Transverse colon (tissue), 4 donors: ENCODE measurements at regions of chr20 and their contacts with region 1.

Region 1: DNA sequence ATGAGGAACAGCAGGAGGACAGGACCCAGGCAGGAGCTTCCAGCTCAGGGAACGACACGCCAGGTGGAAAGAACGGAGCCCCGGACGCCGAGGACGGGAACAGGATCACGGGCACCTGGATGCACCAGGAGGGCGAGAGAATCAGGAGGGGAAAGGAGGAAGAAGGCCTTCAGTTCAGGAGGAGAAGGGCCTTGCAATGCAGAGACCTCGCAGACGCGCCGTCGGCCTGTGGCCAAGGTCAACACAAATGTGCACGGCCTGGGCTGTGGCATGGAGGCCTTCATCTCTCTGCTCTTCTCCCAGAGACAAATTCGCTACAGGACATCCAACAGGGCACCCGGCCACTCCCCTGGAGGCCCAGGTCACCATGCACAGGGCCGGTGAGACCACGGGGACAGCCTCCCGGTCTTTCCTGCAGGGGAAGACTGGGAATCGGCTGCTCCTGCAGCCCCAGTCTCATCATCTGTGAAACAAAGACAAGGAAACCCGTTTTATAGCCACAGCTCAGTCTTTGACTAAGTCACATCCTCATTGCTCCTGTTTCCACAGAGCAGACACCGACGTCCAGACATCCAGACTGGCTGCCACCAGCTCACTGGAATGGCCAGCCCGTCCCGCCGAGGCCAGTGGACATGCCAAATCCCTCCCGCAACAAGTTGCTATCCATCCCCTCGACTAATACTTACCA is 49.1 kb downstream of the YTHDF1 start:
- DNase-seq: no peak
- H3K4me3 ChIP-seq: no peak overlapping the region
- H3K27ac ChIP-seq: no peak overlapping the region
- H3K4me1 ChIP-seq: no peaks in the 10 kb centered on the region
- H3K27me3 ChIP-seq: peaks cover 6% of the 10 kb centered on the region
- CTCF ChIP-seq: no peak
- EP300 ChIP-seq: no peak
- POLR2A ChIP-seq: no peak

Region 2: GRCh38 chr20:63132715-63133471 is 33.9 kb before region 1 on chr20:
- in situ Hi-C with region 1: no loop called
- intact Hi-C with region 1: loop called (anchors 1 kb)
- DNase-seq: no peak
- H3K4me3 ChIP-seq: no peak overlapping the region
- H3K27ac ChIP-seq: no peak overlapping the region
- H3K4me1 ChIP-seq: no peaks in the 10 kb centered on the region
- H3K27me3 ChIP-seq: peaks cover 31% of the 10 kb centered on the region
- CTCF ChIP-seq: no peak
- EP300 ChIP-seq: no peak
- POLR2A ChIP-seq: no peak

Region 3: DNA sequence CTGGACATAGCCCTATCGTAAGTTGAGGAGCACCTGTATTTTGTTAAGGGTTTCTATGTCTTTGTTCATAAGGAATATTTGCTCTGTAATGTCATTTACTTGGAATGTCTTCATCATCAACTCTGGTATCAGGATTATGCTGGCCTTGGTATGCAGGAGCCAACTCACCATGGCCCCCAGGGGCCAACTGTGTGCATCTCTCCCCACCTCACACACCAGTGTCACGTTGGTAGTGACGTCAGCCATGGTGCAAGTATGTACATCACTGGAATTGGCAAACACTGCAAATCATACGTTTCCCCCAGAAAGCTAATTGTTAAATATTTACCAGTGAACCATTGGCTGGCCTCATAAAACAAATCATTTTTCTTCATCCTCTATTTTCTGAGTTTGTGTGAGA is 21.7 kb before region 1 on chr20:
- in situ Hi-C with region 1: no loop called
- intact Hi-C with region 1: no loop called
- DNase-seq: no peak
- H3K4me3 ChIP-seq: no peak overlapping the region
- H3K27ac ChIP-seq: no peak overlapping the region
- H3K4me1 ChIP-seq: no peaks in the 10 kb centered on the region
- H3K27me3 ChIP-seq: peaks cover 21% of the 10 kb centered on the region
- CTCF ChIP-seq: no peak
- EP300 ChIP-seq: no peak
- POLR2A ChIP-seq: no peak

Region 4: DNA sequence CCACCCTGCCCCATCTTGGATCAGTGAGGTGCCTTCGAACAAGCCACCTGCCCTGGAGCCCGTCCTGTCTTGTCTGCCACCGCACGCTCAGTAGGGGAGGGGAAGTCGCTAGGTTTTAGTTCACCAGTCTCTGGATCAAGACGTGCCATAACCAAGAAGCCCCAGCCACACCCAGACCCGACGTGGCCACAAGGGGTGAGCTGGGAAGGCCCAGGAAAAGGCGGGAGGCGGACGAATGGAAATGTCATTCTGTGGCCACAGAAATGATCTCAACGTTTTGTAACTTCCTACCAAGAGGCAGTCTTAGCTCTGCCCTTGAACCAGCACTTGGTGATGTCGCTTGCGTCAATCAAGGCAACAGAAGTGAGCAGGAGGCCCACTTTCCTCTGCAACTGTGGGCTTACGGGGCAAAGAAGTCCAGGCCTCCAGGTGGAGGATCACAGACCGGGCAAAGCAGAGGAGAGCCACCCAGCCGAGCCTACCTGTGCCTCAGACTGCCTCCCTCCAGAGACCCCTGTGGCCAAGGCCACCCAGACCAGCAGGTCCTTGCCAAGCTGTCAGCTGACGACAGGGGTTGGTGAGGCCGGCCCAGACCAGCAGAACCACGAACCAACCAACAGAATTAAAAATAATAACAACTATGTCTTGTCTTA is 445.6 kb after region 1 on chr20:
- in situ Hi-C with region 1: no loop called
- intact Hi-C with region 1: no loop called
- DNase-seq: no peak
- H3K4me3 ChIP-seq: no peak overlapping the region
- H3K27ac ChIP-seq: no peak overlapping the region
- H3K4me1 ChIP-seq: no peaks in the 10 kb centered on the region
- H3K27me3 ChIP-seq: no peaks in the 10 kb centered on the region
- CTCF ChIP-seq: no peak
- EP300 ChIP-seq: no peak
- POLR2A ChIP-seq: no peak